MCF 10A (cell line): ENCODE measurements at regions of chr10 and their contacts with region 1.

Region 1: DNA sequence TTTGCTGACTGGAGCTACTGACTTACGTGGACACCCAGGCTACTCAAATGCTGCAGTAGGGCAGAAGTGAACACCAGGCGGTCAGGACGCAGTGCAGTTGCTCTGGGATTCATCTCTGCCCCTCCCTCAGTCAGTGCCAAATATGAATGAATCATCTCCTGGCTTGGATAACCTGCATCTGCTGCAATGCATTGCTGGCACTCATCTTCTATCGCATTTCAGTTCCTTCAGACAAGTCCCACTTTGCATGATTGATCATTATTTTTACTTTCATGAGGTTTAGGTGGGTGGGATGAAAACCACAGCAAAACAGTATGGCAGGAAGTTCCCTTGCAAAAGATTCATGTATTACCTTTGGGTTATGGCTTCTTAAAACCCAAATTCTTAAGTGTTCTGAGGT is 224.6 kb upstream of the NRP1 start:
- DNase-seq: peak; percentile 88
- H3K4me3 Mint-ChIP-seq: no peak overlapping the region
- H3K27ac Mint-ChIP-seq: no peak overlapping the region
- H3K4me1 Mint-ChIP-seq: peaks cover 12% of the 10 kb centered on the region
- H3K27me3 Mint-ChIP-seq: no peaks in the 10 kb centered on the region
- CTCF ChIP-seq: peak; percentile 11

Region 2: GRCh38 chr10:33193057-33193700 is 365.9 kb before region 1 on chr10:
- CTCF ChIA-PET with region 1: no interaction called
- POLR2A ChIA-PET with region 1: no interaction called
- intact Hi-C with region 1: no loop called
- DNase-seq: peak; percentile 92
- H3K4me3 Mint-ChIP-seq: peak overlapping the region; percentile 47
- H3K27ac Mint-ChIP-seq: peak overlapping the region; percentile 52
- H3K4me1 Mint-ChIP-seq: peaks cover 20% of the 10 kb centered on the region
- H3K27me3 Mint-ChIP-seq: no peaks in the 10 kb centered on the region
- CTCF ChIP-seq: peak; percentile 75

Region 3: DNA sequence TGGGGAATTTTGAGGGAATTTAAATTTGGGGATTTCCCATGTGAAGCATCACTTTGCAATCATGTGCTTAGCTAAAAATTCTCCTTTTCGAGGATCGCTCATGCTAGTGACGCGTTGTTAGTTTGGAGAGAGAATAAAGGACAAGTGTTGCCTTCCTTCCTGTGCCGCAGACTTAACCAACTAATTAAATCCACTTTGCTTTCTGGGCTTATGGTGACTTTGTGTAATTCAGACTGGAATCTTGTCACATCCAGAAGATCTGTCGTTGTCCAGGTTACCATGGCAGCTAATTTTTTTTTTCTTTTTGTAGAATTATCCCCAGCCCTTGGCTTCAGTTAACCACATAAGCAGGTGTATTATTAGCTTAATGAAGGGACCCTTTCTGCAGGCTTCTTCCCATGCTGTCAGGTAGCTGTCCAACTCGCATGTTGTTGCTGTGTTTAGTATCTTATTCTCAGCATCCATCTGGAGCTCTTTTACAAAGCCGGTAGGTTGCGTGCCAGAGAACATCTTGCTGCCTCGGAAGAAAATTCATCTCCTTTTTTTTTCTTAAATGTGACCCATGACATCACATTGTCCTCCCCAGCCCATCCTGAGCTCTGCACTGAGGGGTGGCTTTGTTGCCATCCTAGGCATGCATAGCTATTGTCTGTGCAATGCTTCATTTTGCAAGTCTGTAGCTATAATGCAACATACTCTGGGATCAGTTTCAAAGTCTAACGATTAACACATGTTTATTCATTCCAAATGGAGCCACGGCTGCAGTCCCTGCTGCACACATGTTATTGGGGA is 177.5 kb before region 1 on chr10:
- CTCF ChIA-PET with region 1: no interaction called
- POLR2A ChIA-PET with region 1: no interaction called
- intact Hi-C with region 1: loop called (anchors 5 kb)
- DNase-seq: no peak
- H3K4me3 Mint-ChIP-seq: no peak overlapping the region
- H3K27ac Mint-ChIP-seq: no peak overlapping the region
- H3K4me1 Mint-ChIP-seq: peaks cover 12% of the 10 kb centered on the region
- H3K27me3 Mint-ChIP-seq: no peaks in the 10 kb centered on the region
- CTCF ChIP-seq: no peak